ENCODE measurements at regions of chr6 and their contacts with region 1.

Region 1: GRCh38 chr6:73435236-73435635 is 16.9 kb downstream of the CGAS start:
- DNase-seq: no peak
- H3K4me3 ChIP-seq: no peak overlapping the region
- H3K27ac ChIP-seq: no peak overlapping the region
- H3K4me1 ChIP-seq: no peaks in the 10 kb centered on the region
- H3K27me3 ChIP-seq: no peaks in the 10 kb centered on the region
- CTCF ChIP-seq: no peak

Region 2: GRCh38 chr6:73227606-73228255 is 207.5 kb before region 1 on chr6:
- CTCF ChIA-PET with region 1: no interaction called
- dilution Hi-C with region 1: no loop called
- in situ Hi-C with region 1: no loop called
- intact Hi-C with region 1: no loop called
- DNase-seq: no peak
- H3K4me3 ChIP-seq: no peak overlapping the region
- H3K27ac ChIP-seq: no peak overlapping the region
- H3K4me1 ChIP-seq: no peaks in the 10 kb centered on the region
- H3K27me3 ChIP-seq: no peaks in the 10 kb centered on the region
- CTCF ChIP-seq: no peak

Region 3: GRCh38 chr6:73481969-73482368 is 46.7 kb after region 1 on chr6:
- CTCF ChIA-PET with region 1: no interaction called
- dilution Hi-C with region 1: no loop called
- in situ Hi-C with region 1: no loop called
- intact Hi-C with region 1: no loop called
- DNase-seq: no peak
- H3K4me3 ChIP-seq: no peak overlapping the region
- H3K27ac ChIP-seq: no peak overlapping the region
- H3K4me1 ChIP-seq: no peaks in the 10 kb centered on the region
- H3K27me3 ChIP-seq: no peaks in the 10 kb centered on the region
- CTCF ChIP-seq: no peak

Region 4: DNA sequence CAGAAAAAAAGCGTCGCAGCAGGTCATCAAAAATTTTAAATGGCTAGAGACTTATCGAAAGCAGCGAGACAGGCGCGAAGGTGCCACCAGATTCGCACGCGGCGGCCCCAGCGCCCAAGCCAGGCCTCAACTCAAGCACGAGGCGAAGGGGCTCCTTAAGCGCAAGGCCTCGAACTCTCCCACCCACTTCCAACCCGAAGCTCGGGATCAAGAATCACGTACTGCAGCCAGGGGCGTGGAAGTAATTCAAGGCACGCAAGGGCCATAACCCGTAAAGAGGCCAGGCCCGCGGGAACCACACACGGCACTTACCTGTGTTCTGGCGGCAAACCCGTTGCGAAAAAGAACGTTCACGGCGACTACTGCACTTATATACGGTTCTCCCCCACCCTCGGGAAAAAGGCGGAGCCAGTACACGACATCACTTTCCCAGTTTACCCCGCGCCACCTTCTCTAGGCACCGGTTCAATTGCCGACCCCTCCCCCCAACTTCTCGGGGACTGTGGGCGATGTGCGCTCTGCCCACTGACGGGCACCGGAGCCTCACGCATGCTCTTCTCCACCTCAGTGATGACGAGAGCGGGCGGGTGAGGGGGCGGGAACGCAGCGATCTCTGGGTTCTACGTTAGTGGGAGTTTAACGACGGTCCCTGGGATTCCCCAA is 85.6 kb after region 1 on chr6 and contains the start of gene EEF1A1:
- CTCF ChIA-PET with region 1: no interaction called
- dilution Hi-C with region 1: no loop called
- in situ Hi-C with region 1: no loop called
- intact Hi-C with region 1: no loop called
- DNase-seq: peak; percentile 100
- H3K4me3 ChIP-seq: peak within 1 kb of the TSS; percentile 67 to 93 (median 79)
- H3K27ac ChIP-seq: peak within 1 kb of the TSS; percentile 98
- H3K4me1 ChIP-seq: peaks cover 19% of the 10 kb centered on the region
- H3K27me3 ChIP-seq: no peaks in the 10 kb centered on the region
- CTCF ChIP-seq: peak in 1 of 2 donors; percentile 7
- total RNA-seq, gene EEF1A1: 7,332 to 17,769 TPM

Region 5: DNA sequence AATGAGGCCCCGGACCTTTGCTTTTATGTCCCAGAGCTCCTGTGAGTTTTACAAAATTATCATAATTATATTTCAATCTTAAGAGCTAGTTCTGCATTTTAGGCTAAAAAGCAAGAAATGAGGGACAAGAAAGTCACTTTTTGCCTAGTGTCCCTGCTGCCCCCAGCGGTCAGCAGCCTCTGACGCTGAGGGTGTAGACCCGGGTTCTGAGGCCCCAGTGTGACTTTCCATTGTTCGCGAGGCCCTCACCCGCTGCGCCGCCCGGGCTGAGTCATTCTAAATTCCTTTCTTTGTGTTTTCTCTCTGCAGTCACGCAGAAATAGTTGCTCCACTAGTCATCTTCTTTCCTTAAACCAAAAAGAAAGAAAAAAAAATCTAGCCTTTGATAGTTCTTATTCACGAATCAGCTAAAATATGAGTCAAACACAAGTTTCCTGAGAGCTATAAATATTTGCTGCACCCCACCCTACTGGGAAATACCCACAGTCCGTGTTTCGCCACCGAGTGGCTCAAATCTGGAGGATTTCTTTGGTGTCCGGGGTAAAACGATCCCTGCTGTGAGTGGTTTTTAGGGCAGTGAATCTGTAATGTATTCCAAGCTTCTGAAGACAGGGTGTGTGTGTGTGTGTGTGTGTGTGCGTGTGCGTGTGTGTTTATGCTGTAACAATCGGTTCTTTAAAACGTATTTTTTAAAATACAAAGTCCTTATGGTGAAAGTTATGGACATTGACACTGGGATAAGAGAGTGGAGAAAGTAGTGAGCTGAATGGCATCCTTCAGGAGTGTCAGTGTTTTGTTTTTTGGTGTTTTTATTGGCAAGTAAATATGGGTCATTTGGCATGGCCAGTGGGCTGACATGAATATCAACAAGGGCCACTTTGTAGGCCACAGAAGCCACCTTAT is 145.3 kb after region 1 on chr6:
- CTCF ChIA-PET with region 1: no interaction called
- dilution Hi-C with region 1: no loop called
- in situ Hi-C with region 1: no loop called
- intact Hi-C with region 1: no loop called
- DNase-seq: peak; percentile 98
- H3K4me3 ChIP-seq: peak overlapping the region; percentile 45 to 57 (median 48)
- H3K27ac ChIP-seq: peak overlapping the region; percentile 100
- H3K4me1 ChIP-seq: peaks cover 30% of the 10 kb centered on the region
- H3K27me3 ChIP-seq: no peaks in the 10 kb centered on the region
- CTCF ChIP-seq: peak; percentile 29 to 49

Region 6: GRCh38 chr6:73631849-73632248 is 196.6 kb after region 1 on chr6:
- CTCF ChIA-PET with region 1: interaction called, 11 read pairs
- dilution Hi-C with region 1: no loop called
- in situ Hi-C with region 1: no loop called
- intact Hi-C with region 1: no loop called
- DNase-seq: no peak
- H3K4me3 ChIP-seq: no peak overlapping the region
- H3K27ac ChIP-seq: no peak overlapping the region
- H3K4me1 ChIP-seq: no peaks in the 10 kb centered on the region
- H3K27me3 ChIP-seq: no peaks in the 10 kb centered on the region
- CTCF ChIP-seq: no peak

Measured in mammary epithelial cell (primary cell).